Upper lobe of right lung (tissue), 1 donor: ENCODE measurements at regions of chr20 and their contacts with region 1.

Region 1: GRCh38 chr20:44217342-44218092 is 6.9 kb upstream of the OSER1 start:
- DNase-seq: peak; percentile 82
- ATAC-seq: peak; percentile 94
- H3K4me3 ChIP-seq: peak overlapping the region; percentile 36
- H3K27ac ChIP-seq: peak overlapping the region; percentile 58
- H3K4me1 ChIP-seq: peaks cover 13% of the 10 kb centered on the region
- H3K27me3 ChIP-seq: no peaks in the 10 kb centered on the region
- CTCF ChIP-seq: peak; percentile 91

Region 2: DNA sequence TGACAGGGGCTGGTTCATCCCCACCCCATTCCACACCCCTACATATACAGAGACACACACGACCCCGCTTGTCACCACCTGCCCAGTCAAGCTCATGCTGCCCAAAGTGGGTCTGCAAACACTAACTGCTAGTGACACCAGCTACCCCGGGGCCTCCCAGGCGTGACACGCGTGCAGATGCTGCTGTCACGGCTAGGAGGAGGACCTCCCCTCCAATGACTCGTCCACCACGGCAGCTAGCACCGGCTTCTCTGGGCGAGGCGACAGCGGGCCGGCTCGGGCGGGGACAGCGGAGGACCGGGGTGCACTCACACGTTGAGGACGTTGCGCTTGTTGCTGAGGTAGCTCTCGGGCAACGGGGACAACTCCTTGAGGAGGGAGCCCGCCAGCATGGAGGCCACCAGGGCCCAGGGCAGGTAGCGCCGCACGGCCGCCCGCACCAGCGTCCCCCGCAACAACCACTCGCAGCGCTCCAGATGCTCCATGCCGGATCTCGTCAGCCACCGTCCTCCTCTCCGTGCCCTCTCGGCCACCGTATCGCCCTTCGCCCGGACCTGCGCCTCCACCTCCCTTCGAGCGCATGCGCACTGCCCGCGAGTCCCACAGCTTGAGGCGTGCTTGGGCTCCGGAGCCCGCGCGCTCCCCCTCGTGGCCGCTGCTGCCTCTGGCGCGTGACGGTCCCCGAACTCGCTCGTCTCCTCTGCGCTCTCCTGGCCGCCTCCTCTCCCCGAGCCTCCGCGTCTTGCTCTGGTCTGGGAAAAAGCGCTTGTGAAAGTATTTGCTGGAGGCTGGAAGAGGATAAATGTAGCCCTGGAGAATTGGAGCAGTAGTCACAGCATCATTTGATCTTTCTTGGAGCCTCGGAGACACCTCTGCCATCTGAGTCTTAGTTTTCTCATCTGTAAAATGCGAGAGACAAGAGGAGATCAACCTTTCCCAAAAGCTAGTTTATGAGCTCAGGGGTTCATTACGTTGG is 93.4 kb after region 1 on chr20 and contains the start of gene FITM2:
- intact Hi-C with region 1: loop called (anchors 5 kb)
- DNase-seq: peak; percentile 100
- ATAC-seq: peak; percentile 99
- H3K4me3 ChIP-seq: peak within 1 kb of the TSS; percentile 97
- H3K27ac ChIP-seq: peak within 1 kb of the TSS; percentile 79
- H3K4me1 ChIP-seq: peaks cover 9% of the 10 kb centered on the region
- H3K27me3 ChIP-seq: no peaks in the 10 kb centered on the region
- CTCF ChIP-seq: peak; percentile 95
- total RNA-seq, gene FITM2: 12.6 TPM

Region 3: GRCh38 chr20:44460795-44461141 is 243.3 kb after region 1 on chr20:
- intact Hi-C with region 1: no loop called
- DNase-seq: no peak
- ATAC-seq: peak; percentile 40
- H3K4me3 ChIP-seq: no peak overlapping the region
- H3K27ac ChIP-seq: no peak overlapping the region
- H3K4me1 ChIP-seq: no peaks in the 10 kb centered on the region
- H3K27me3 ChIP-seq: no peaks in the 10 kb centered on the region
- CTCF ChIP-seq: peak; percentile 47

Region 4: DNA sequence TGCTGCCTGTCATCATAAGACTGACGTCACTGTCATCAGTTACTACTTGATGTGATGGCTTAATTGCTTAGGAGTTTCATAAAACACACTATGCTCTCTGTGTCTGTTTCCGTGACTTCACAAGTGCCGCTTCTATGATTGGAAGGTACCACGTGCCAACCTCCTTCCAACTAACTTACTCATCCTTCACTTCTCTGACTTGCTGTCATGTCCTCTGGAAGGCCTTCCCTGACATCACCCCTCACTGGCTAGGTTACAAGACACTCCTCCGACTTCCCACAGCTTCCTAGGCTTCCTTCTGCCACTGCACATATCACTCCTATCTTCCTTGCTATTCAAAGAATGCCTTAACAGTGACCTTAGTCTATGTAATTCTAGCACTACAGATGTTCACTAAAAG is 283.9 kb after region 1 on chr20:
- intact Hi-C with region 1: no loop called
- DNase-seq: no peak
- ATAC-seq: no peak
- H3K4me3 ChIP-seq: no peak overlapping the region
- H3K27ac ChIP-seq: no peak overlapping the region
- H3K4me1 ChIP-seq: no peaks in the 10 kb centered on the region
- H3K27me3 ChIP-seq: no peaks in the 10 kb centered on the region
- CTCF ChIP-seq: no peak